ENCODE measurements at regions of chr16 and their contacts with region 1.

Region 1: GRCh38 chr16:12095275-12096156 is 119.0 kb downstream of the SNX29 start:
- DNase-seq: peak; percentile 70
- H3K4me3 ChIP-seq: peak overlapping the region in 1 of 4 donors; percentile 2
- H3K27ac ChIP-seq: peak overlapping the region in 3 of 4 donors; percentile 18 to 53 (median 43)
- H3K4me1 ChIP-seq: peaks cover 7 to 43% (median 18%) of the 10 kb centered on the region in 4 donors
- H3K27me3 ChIP-seq: no peaks in the 10 kb centered on the region
- CTCF ChIP-seq: peak; percentile 79 to 93 (median 91)
- EP300 ChIP-seq: no peak
- POLR2A ChIP-seq: no peak

Region 2: DNA sequence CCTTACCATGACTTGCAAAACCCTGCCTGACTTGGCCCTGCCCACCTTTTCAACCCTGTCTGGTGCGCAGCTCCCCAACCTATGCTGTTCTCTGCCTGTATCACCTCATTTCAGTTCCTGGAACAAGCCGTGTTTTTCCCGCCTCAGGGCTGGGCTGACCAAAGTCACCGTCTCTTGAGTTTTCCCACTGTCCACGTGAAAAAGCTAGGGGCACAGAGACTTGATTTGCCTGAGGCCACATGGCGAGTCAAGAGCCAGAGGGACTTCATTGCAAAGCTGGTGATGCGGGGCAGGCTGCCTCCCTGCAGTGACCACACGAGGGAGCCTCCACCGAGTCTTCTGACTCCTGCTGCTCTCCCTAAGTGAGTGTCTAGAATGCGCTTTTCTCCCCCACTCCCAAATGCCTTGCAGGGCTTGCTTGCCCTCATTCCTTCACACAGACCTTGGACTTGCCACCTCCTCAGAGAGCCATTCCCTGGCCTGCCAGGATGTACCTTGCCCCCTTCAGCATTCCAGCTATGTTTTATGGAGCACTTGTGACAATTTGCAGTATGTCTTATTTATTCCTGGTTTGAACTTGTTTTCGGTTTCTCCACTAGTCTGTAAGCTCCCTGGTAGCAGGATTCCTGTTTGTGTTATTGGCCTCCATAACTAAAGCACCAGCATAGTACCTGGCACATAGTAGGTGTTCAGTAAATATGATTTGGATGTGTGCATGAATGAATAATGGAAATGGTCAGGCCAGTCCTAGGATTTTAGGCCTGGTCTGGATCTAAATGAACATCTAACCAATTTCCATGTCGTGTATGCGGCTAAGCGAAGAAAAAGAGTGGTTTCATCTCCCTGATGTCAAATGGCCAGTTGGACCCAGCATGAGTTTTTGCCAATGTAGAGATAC is 133.3 kb after region 1 on chr16:
- in situ Hi-C with region 1: no loop called
- intact Hi-C with region 1: loop called (anchors 10 kb)
- DNase-seq: peak; percentile 80
- H3K4me3 ChIP-seq: peak overlapping the region in 1 of 4 donors; percentile 7
- H3K27ac ChIP-seq: peak overlapping the region in 3 of 4 donors; percentile 20 to 36 (median 27)
- H3K4me1 ChIP-seq: peaks cover 0 to 18% (median 14%) of the 10 kb centered on the region in 4 donors
- H3K27me3 ChIP-seq: no peaks in the 10 kb centered on the region
- CTCF ChIP-seq: peak; percentile 55 to 72 (median 62)
- EP300 ChIP-seq: no peak
- POLR2A ChIP-seq: no peak

Region 3: DNA sequence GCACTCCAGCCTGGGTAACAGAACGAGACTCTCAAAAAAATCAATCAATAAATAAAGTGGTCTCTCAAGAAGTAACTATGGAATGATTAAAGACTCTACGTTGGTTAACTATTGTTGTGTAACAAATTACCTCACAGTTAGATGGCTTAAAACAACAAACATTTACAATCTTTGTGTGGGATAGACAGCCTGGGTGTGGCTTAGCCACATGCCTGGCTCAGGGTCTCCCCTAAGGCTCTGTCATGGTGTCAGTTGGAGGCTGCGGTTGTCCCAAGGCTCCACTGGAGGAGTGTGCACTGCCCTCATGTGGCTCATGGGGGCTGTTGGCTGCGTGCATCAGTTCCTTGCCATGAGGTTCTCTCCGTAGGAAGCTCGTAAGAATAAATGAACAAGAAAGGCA is 175.5 kb after region 1 on chr16:
- in situ Hi-C with region 1: loop called in 1 of 4 experiments (anchors 25 kb)
- intact Hi-C with region 1: no loop called
- DNase-seq: no peak
- H3K4me3 ChIP-seq: no peak overlapping the region
- H3K27ac ChIP-seq: no peak overlapping the region
- H3K4me1 ChIP-seq: no peaks in the 10 kb centered on the region
- H3K27me3 ChIP-seq: no peaks in the 10 kb centered on the region
- CTCF ChIP-seq: peak in 2 of 5 experiments; percentile 14 to 26
- EP300 ChIP-seq: no peak
- POLR2A ChIP-seq: no peak

Region 4: GRCh38 chr16:12289175-12290063 is 193.9 kb after region 1 on chr16:
- in situ Hi-C with region 1: no loop called
- intact Hi-C with region 1: no loop called
- DNase-seq: peak; percentile 53
- H3K4me3 ChIP-seq: no peak overlapping the region
- H3K27ac ChIP-seq: peak overlapping the region in 2 of 4 donors; percentile 4 to 27
- H3K4me1 ChIP-seq: peaks cover 0 to 11% (median 8%) of the 10 kb centered on the region in 4 donors
- H3K27me3 ChIP-seq: no peaks in the 10 kb centered on the region
- CTCF ChIP-seq: no peak
- EP300 ChIP-seq: no peak
- POLR2A ChIP-seq: no peak

Region 5: DNA sequence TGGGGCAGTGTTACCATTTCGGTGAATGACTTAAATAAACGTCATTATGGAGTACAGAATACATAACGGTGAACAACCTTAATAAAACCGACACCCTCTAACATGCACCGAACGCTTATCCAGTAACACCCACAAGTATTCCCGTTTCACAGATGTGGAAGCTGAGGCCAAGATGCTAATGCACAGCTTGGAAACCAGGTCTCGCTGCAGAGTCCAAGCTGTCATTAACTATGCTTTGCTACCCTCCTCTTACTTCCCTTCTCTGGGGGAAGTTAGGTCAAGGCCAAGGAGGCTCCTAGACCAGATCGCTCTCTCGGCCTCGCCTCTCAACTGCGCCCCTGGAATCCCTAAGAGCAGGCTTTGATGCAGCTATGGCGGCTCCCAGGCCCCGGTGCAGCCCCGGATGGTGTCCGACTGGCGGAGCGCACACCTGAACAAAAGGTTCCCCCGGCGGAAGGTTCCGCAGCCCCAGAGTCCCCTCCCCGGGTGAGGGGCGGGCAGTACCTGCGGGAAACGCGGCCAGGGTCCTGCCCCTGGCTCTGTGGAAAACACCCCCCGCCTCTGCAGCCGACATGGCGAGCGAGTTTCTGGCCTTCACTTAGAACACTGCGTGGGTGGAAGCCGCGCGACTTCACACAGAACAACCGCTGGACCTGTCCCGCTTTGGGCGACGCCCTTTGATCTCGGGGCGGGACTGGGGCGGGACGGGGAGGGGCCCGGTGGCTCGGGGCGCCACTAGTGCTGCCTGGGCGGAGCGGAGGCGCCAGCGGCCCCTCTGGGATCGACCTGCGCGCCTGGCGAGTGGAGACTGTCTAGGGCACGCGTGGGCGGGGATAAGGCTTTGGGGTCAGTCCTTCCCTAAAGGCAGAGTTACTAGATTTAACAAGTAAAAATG is 707.9 kb after region 1 on chr16 and contains the start of gene CPPED1:
- in situ Hi-C with region 1: loop called in 2 of 4 experiments (anchors 25 kb)
- intact Hi-C with region 1: no loop called
- DNase-seq: peak; percentile 94
- H3K4me3 ChIP-seq: peak within 1 kb of the TSS; percentile 52 to 84 (median 56)
- H3K27ac ChIP-seq: peak within 1 kb of the TSS; percentile 84 to 93 (median 89)
- H3K4me1 ChIP-seq: peaks cover 0 to 29% (median 20%) of the 10 kb centered on the region in 4 donors
- H3K27me3 ChIP-seq: no peaks in the 10 kb centered on the region
- CTCF ChIP-seq: no peak
- EP300 ChIP-seq: no peak
- POLR2A ChIP-seq: peak; percentile 60
- total RNA-seq, gene CPPED1: 4.1 to 17.3 (median 12.7) TPM

Region 6: GRCh38 chr16:12819126-12820117 is 723.9 kb after region 1 on chr16:
- in situ Hi-C with region 1: loop called in 3 of 4 experiments (anchors 10 to 25 kb)
- intact Hi-C with region 1: loop called (anchors 5 kb)
- DNase-seq: peak; percentile 73
- H3K4me3 ChIP-seq: no peak overlapping the region
- H3K27ac ChIP-seq: no peak overlapping the region
- H3K4me1 ChIP-seq: no peaks in the 10 kb centered on the region
- H3K27me3 ChIP-seq: no peaks in the 10 kb centered on the region
- CTCF ChIP-seq: peak; percentile 81 to 85 (median 83)
- EP300 ChIP-seq: no peak
- POLR2A ChIP-seq: no peak